CD4-positive, alpha-beta memory T cell (primary cell): ENCODE measurements at regions of chrX and their contacts with region 1.

Region 1: GRCh38 chrX:16882702-16883486 is 12.7 kb upstream of the RBBP7 start:
- DNase-seq: peak; percentile 55 to 70 (median 61)
- H3K4me3 ChIP-seq: peak overlapping the region in 1 of 2 donors; percentile 64
- H3K4me3 Mint-ChIP-seq: peak overlapping the region; percentile 70 to 90 (median 80)
- H3K27ac ChIP-seq: peak overlapping the region; percentile 38
- H3K27ac Mint-ChIP-seq: peak overlapping the region; percentile 22 to 78 (median 53)
- H3K4me1 ChIP-seq: peaks cover 11% of the 10 kb centered on the region
- H3K4me1 Mint-ChIP-seq: peaks cover 3 to 14% (median 9%) of the 10 kb centered on the region in 4 donors
- H3K27me3 ChIP-seq: no peaks in the 10 kb centered on the region
- H3K27me3 Mint-ChIP-seq: no peaks in the 10 kb centered on the region

Region 2: GRCh38 chrX:16848541-16848940 is 34.4 kb before region 1 on chrX:
- CTCF ChIA-PET with region 1: no interaction called
- POLR2A ChIA-PET with region 1: no interaction called
- intact Hi-C with region 1: no loop called
- DNase-seq: no peak
- H3K4me3 ChIP-seq: no peak overlapping the region
- H3K4me3 Mint-ChIP-seq: no peak overlapping the region
- H3K27ac ChIP-seq: no peak overlapping the region
- H3K27ac Mint-ChIP-seq: peak overlapping the region in 2 of 7 donors; percentile 6 to 11
- H3K4me1 ChIP-seq: no peaks in the 10 kb centered on the region
- H3K4me1 Mint-ChIP-seq: no peaks in the 10 kb centered on the region
- H3K27me3 ChIP-seq: no peaks in the 10 kb centered on the region
- H3K27me3 Mint-ChIP-seq: no peaks in the 10 kb centered on the region

Region 3: DNA sequence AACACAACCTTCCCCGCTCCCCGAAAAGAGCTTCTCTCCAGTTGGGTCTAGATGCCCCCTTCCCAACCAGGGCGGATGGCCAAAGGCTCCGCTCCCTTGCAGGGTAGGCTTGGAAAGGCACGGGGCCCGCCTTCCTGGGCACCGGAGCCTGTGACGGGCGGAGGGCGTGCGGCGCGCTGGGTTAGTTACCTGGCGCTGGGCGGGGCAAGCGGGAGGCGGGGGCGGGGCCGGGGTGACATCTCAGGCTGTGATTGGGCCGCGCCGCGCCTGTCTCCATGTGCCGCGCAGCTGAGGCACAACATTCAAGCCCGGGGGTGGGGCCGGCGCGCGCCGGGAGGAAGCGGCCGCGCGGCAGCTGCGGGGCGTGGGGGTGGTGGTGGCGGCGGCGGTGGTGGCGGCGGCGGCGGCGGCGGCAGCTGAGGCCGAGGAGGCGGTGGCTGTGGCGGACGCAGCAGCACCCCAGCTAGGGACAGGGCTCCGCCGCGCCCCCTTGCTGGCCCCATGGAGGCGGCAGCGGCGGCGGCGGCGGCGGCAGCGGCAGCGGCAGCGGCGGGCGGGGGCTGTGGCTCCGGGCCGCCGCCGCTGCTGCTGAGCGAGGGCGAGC is 63.6 kb after region 1 on chrX and contains the start of gene REPS2:
- CTCF ChIA-PET with region 1: no interaction called
- POLR2A ChIA-PET with region 1: interaction called, 7 read pairs
- intact Hi-C with region 1: loop called (anchors 5 kb)
- DNase-seq: peak; percentile 67 to 84 (median 73)
- H3K4me3 ChIP-seq: peak within 1 kb of the TSS in 1 of 2 donors; percentile 19
- H3K4me3 Mint-ChIP-seq: peak within 1 kb of the TSS; percentile 79 to 87 (median 86)
- H3K27ac ChIP-seq: no peak within 1 kb of the TSS
- H3K27ac Mint-ChIP-seq: peak within 1 kb of the TSS; percentile 46 to 87 (median 76)
- H3K4me1 ChIP-seq: no peaks in the 10 kb centered on the region
- H3K4me1 Mint-ChIP-seq: peaks cover 0 to 3% (median 0%) of the 10 kb centered on the region in 4 donors
- H3K27me3 ChIP-seq: no peaks in the 10 kb centered on the region
- H3K27me3 Mint-ChIP-seq: peaks cover 0 to 3% of the 10 kb centered on the region in 2 donors
- total RNA-seq, gene REPS2: 0.69 to 1.4 TPM

Region 4: DNA sequence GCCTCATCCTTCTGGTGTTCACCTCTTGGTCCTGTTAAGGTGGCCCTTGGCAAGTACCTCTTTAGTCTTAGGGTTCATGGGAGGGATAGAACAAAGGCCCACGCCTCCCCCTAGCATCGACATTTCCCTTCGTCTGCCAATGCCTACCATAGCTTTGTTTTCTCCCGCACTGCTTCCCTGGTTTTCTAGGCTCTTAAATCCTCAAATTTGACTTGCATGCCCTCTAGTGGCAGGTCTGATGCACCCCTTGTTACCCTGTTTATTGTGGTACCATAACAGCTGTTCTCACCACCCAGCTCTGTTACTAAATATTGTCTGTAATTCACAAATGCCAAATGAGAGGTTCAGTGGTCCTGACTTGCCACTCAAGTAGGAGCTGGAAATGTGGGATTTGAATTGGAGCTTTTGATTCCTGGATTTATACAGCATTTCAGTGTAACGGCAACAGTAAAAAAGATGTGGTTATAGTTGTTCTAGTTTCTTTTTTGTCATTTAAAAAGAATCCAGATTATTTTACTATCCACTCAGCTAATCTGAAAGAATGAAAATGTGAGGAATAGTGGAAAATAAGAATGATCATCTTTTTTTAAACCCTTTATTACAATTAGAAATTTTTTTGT is 163.7 kb after region 1 on chrX:
- CTCF ChIA-PET with region 1: interaction called, 54 read pairs
- POLR2A ChIA-PET with region 1: no interaction called
- intact Hi-C with region 1: no loop called
- DNase-seq: peak in 4 of 5 donors; percentile 11 to 25 (median 23)
- H3K4me3 ChIP-seq: no peak overlapping the region
- H3K4me3 Mint-ChIP-seq: no peak overlapping the region
- H3K27ac ChIP-seq: no peak overlapping the region
- H3K27ac Mint-ChIP-seq: no peak overlapping the region
- H3K4me1 ChIP-seq: no peaks in the 10 kb centered on the region
- H3K4me1 Mint-ChIP-seq: no peaks in the 10 kb centered on the region
- H3K27me3 ChIP-seq: no peaks in the 10 kb centered on the region
- H3K27me3 Mint-ChIP-seq: no peaks in the 10 kb centered on the region

Region 5: DNA sequence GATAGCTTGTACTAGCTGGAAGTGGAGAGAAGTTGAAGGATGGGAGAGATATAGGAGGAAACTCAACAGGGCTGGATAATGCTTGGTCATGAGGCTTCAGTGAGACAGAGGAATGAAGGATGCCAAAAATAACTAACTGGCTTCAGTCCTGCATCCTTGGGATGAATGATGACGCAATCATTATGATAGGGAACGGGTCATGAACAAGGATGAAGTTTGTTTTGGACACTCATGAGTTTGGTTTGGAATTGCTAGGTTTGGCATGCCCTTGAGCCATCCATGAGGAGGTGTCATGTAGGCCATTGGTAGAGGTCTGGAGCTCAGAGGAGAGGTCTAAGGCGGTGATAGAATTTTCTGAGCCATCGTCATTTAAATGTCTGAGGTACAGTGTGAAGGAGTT is 332.1 kb after region 1 on chrX:
- CTCF ChIA-PET with region 1: no interaction called
- POLR2A ChIA-PET with region 1: no interaction called
- intact Hi-C with region 1: no loop called
- DNase-seq: no peak
- H3K4me3 ChIP-seq: no peak overlapping the region
- H3K4me3 Mint-ChIP-seq: no peak overlapping the region
- H3K27ac ChIP-seq: no peak overlapping the region
- H3K27ac Mint-ChIP-seq: peak overlapping the region in 1 of 7 donors; percentile 81
- H3K4me1 ChIP-seq: no peaks in the 10 kb centered on the region
- H3K4me1 Mint-ChIP-seq: no peaks in the 10 kb centered on the region
- H3K27me3 ChIP-seq: no peaks in the 10 kb centered on the region
- H3K27me3 Mint-ChIP-seq: peaks cover 0 to 4% of the 10 kb centered on the region in 2 donors